WTC11 (cell line): ENCODE measurements at regions of chr2 and their contacts with region 1.

Region 1: GRCh38 chr2:130372055-130372832 is 16.4 kb downstream of the PTPN18 start:
- DNase-seq: peak; percentile 92
- ATAC-seq: peak; percentile 89
- H3K4me3 Mint-ChIP-seq: peak overlapping the region; percentile 83
- H3K27ac Mint-ChIP-seq: no peak overlapping the region; the same call in 1 of the 2 replicates
- H3K4me1 Mint-ChIP-seq: peaks cover 32% of the 10 kb centered on the region
- H3K27me3 Mint-ChIP-seq: peaks cover 4% of the 10 kb centered on the region
- CTCF ChIP-seq: peak; percentile 93

Region 2: GRCh38 chr2:130162968-130163367 is 209.3 kb before region 1 on chr2:
- CTCF ChIA-PET with region 1: no interaction called
- POLR2A ChIA-PET with region 1: no interaction called
- DNase-seq: no peak
- ATAC-seq: no peak
- H3K4me3 Mint-ChIP-seq: no peak overlapping the region
- H3K27ac Mint-ChIP-seq: no peak overlapping the region
- H3K4me1 Mint-ChIP-seq: peaks cover 3% of the 10 kb centered on the region
- H3K27me3 Mint-ChIP-seq: no peaks in the 10 kb centered on the region
- CTCF ChIP-seq: no peak

Region 3: GRCh38 chr2:130332271-130333073 is 39.8 kb before region 1 on chr2:
- CTCF ChIA-PET with region 1: interaction called, 12 read pairs
- POLR2A ChIA-PET with region 1: interaction called, 8 read pairs
- DNase-seq: peak; percentile 83
- ATAC-seq: peak; percentile 71
- H3K4me3 Mint-ChIP-seq: peak overlapping the region; percentile 71
- H3K27ac Mint-ChIP-seq: no peak overlapping the region
- H3K4me1 Mint-ChIP-seq: peaks cover 20% of the 10 kb centered on the region
- H3K27me3 Mint-ChIP-seq: peaks cover 39% of the 10 kb centered on the region
- CTCF ChIP-seq: peak; percentile 89

Region 4: GRCh38 chr2:130342533-130343275 is 29.5 kb before region 1 on chr2 and contains the start of gene IMP4:
- CTCF ChIA-PET with region 1: interaction called, 26 read pairs
- POLR2A ChIA-PET with region 1: interaction called, 7 read pairs
- DNase-seq: peak; percentile 94
- ATAC-seq: peak; percentile 89
- H3K4me3 Mint-ChIP-seq: peak within 1 kb of the TSS; percentile 100
- H3K27ac Mint-ChIP-seq: peak within 1 kb of the TSS; percentile 98
- H3K4me1 Mint-ChIP-seq: peaks cover 13% of the 10 kb centered on the region
- H3K27me3 Mint-ChIP-seq: no peaks in the 10 kb centered on the region
- CTCF ChIP-seq: no peak
- total RNA-seq, gene IMP4: 80.4 to 89.2 TPM (median 85.2 TPM) in 3 replicates

Region 5: GRCh38 chr2:130355578-130356431 is 16.4 kb before region 1 on chr2 and contains the start of gene PTPN18:
- CTCF ChIA-PET with region 1: interaction called, 13 read pairs
- POLR2A ChIA-PET with region 1: no interaction called
- DNase-seq: peak; percentile 59
- ATAC-seq: peak; percentile 85
- H3K4me3 Mint-ChIP-seq: peak within 1 kb of the TSS; percentile 78
- H3K27ac Mint-ChIP-seq: no peak within 1 kb of the TSS
- H3K4me1 Mint-ChIP-seq: peaks cover 17% of the 10 kb centered on the region
- H3K27me3 Mint-ChIP-seq: peaks cover 35% of the 10 kb centered on the region
- CTCF ChIP-seq: no peak; the same call in 1 of the 2 replicates
- total RNA-seq, gene PTPN18: 15.7 to 21.8 TPM (median 21.0 TPM) in 3 replicates

Region 6: GRCh38 chr2:130385709-130386108 is 13.5 kb after region 1 on chr2:
- CTCF ChIA-PET with region 1: interaction called, 13 read pairs
- POLR2A ChIA-PET with region 1: no interaction called
- DNase-seq: no peak
- ATAC-seq: no peak
- H3K4me3 Mint-ChIP-seq: no peak overlapping the region
- H3K27ac Mint-ChIP-seq: no peak overlapping the region
- H3K4me1 Mint-ChIP-seq: peaks cover 14% of the 10 kb centered on the region
- H3K27me3 Mint-ChIP-seq: peaks cover 11% of the 10 kb centered on the region
- CTCF ChIP-seq: no peak